Activated CD4-positive, alpha-beta T cell treated with anti-CD3 and anti-CD28 coated beads, Interleukin-2, amount 10 ng/mL, durations not matched to agents 24 days and 14 days (primary cell): ENCODE measurements at regions of chr13 and their contacts with region 1.

Region 1: DNA sequence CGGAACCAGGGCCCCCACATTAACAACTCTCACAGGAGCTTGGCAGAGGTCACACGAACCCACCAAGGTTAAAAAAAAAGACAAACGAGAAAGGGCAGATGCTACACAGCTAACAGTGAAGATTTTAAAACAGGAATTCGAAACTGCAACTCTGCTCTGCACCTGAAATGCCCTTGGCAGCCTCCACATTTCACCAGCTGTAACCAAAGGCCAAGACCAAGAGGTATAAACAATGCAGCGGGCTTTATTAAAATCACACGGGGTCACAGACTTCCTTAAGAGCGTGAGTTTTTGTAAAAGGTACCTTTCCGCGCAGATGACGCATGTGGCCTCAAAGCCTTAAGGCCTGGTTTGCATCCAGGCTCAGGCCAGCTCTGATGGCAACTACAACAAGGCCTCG is 88.2 kb downstream of the STK24 start:
- DNase-seq: no peak
- H3K4me3 Mint-ChIP-seq: no peak overlapping the region
- H3K27ac Mint-ChIP-seq: peak overlapping the region; percentile 12
- H3K4me1 Mint-ChIP-seq: peaks cover 52% of the 10 kb centered on the region
- H3K27me3 Mint-ChIP-seq: no peaks in the 10 kb centered on the region

Region 2: DNA sequence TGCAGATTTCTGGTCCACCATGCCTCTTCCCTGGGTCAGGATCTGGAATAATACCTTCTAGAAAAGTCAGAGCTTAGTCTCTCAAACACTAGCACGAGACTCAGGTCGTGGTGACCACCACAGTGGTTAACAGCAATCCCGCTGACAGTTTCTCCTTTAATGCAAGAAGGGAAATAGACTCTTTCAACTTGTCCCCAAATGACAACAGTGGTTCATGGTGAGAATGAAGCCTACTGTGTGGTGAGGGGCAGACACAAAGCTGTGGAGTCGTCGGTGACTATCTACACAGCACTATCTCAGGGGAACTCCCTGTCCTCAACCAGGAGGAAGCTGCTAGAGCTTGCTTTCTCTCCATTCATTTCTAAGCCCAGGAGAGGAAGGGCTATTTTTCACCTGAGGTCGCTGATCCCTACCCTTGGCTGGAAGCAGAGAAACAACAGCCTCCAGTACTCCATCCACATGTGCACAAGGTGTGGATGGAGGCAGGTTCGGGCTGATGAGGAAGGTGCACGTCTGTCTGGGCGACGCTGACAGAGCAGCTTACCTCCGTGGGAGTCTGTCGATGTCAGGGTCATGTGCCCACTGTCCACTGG is 15.7 kb after region 1 on chr13:
- intact Hi-C with region 1: loop called (anchors 2 kb)
- DNase-seq: no peak
- H3K4me3 Mint-ChIP-seq: no peak overlapping the region
- H3K27ac Mint-ChIP-seq: peak overlapping the region; percentile 71
- H3K4me1 Mint-ChIP-seq: peaks cover 62% of the 10 kb centered on the region
- H3K27me3 Mint-ChIP-seq: no peaks in the 10 kb centered on the region